ENCODE measurements at regions of chr12 and their contacts with region 1.

Region 1: GRCh38 chr12:109093022-109093918 is at the start of gene ALKBH2:
- DNase-seq: peak; percentile 92 to 96 (median 94)
- H3K4me3 ChIP-seq: peak within 1 kb of the TSS; percentile 86
- H3K4me3 Mint-ChIP-seq: peak within 1 kb of the TSS; percentile 57 to 88 (median 83)
- H3K27ac ChIP-seq: peak within 1 kb of the TSS; percentile 70
- H3K27ac Mint-ChIP-seq: peak within 1 kb of the TSS; percentile 86 to 97 (median 94)
- H3K4me1 ChIP-seq: peaks cover 21% of the 10 kb centered on the region
- H3K4me1 Mint-ChIP-seq: peaks cover 32 to 43% (median 32%) of the 10 kb centered on the region in 3 donors
- H3K27me3 ChIP-seq: no peaks in the 10 kb centered on the region
- H3K27me3 Mint-ChIP-seq: no peaks in the 10 kb centered on the region
- total RNA-seq, gene ALKBH2: 41.3 to 42.9 TPM

Region 2: GRCh38 chr12:108884116-108885012 is 208.9 kb before region 1 on chr12:
- CTCF ChIA-PET with region 1: interaction called, 13 read pairs
- POLR2A ChIA-PET with region 1: no interaction called
- DNase-seq: peak; percentile 33 to 71 (median 46)
- H3K4me3 ChIP-seq: no peak overlapping the region
- H3K4me3 Mint-ChIP-seq: no peak overlapping the region
- H3K27ac ChIP-seq: no peak overlapping the region
- H3K27ac Mint-ChIP-seq: no peak overlapping the region
- H3K4me1 ChIP-seq: no peaks in the 10 kb centered on the region
- H3K4me1 Mint-ChIP-seq: peaks cover 0 to 4% (median 0%) of the 10 kb centered on the region in 3 donors
- H3K27me3 ChIP-seq: no peaks in the 10 kb centered on the region
- H3K27me3 Mint-ChIP-seq: peaks cover 0 to 7% of the 10 kb centered on the region in 2 donors

Region 3: GRCh38 chr12:109165599-109165998 is 72.3 kb after region 1 on chr12:
- CTCF ChIA-PET with region 1: no interaction called
- POLR2A ChIA-PET with region 1: no interaction called
- DNase-seq: no peak
- H3K4me3 ChIP-seq: no peak overlapping the region
- H3K4me3 Mint-ChIP-seq: no peak overlapping the region
- H3K27ac ChIP-seq: no peak overlapping the region
- H3K27ac Mint-ChIP-seq: no peak overlapping the region
- H3K4me1 ChIP-seq: no peaks in the 10 kb centered on the region
- H3K4me1 Mint-ChIP-seq: no peaks in the 10 kb centered on the region
- H3K27me3 ChIP-seq: no peaks in the 10 kb centered on the region
- H3K27me3 Mint-ChIP-seq: peaks cover 0 to 2% of the 10 kb centered on the region in 2 donors

Region 4: DNA sequence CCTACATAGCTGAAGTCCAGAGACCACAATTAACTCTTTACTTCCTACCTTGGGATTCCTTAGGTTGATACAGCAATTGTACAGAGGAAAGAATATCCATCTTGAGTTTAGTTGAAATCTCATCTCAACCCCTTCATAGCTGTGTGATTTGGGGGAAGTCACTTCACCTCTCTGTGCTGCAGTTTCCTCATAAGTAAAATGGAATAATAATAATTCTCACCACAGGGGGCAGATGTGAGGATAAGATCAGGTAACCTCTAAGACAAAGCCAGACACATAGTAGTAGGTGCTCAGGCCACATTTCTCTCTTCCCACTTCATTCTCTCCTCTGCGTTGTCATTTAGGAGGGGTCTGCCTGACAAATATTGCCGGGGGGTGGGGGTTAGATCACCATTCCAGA is 209.1 kb after region 1 on chr12:
- CTCF ChIA-PET with region 1: no interaction called
- POLR2A ChIA-PET with region 1: no interaction called
- DNase-seq: no peak
- H3K4me3 ChIP-seq: no peak overlapping the region
- H3K4me3 Mint-ChIP-seq: no peak overlapping the region
- H3K27ac ChIP-seq: no peak overlapping the region
- H3K27ac Mint-ChIP-seq: no peak overlapping the region
- H3K4me1 ChIP-seq: no peaks in the 10 kb centered on the region
- H3K4me1 Mint-ChIP-seq: no peaks in the 10 kb centered on the region
- H3K27me3 ChIP-seq: peaks cover 8% of the 10 kb centered on the region
- H3K27me3 Mint-ChIP-seq: peaks cover 29 to 49% of the 10 kb centered on the region in 2 donors